Vagina (tissue), 2 donors: ENCODE measurements at regions of chr9 and their contacts with region 1.

Region 1: DNA sequence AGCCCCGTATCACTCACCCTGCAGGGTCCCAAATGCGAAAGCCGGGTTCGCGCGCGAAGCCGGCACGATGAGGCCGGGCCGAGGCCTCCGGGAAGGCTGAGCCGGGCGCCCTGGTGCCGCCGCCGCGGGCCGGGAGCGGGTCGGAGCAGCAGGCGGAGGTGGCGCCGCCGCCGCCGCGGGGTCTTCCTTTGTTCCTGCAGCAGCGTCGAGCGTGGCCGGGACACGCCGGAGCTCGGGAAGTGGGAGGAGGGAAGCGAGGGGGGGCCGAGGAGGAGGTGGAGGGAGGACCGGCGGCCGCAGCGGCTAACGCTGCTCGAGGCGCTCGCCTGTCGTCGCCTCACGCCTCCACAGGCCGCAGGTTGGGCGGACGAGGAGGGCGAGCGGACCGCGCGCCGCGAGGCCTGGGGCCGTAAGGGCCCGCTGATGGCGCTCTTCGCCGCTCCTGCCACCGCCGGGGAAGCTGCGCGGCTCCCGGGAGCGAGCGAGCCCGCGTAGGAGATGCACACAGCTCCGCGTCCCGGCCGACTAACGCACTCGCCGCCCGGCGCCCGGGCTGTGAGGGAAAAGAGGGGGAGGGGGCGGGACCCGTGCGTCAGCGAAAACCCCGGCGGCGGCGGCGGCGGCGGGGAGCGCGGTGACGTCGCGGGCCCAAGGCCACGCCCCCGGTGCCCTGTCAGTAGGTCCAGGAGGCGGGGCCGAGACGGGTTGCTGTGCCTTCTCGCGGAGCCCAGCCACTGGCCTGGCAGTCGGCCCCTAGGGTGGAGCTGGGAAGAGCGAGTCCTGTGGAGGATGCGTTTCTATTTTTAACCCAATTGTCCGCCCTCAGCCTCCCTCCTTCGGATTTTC is at the start of gene ZFAND5:
- DNase-seq: peak; percentile 97 to 99
- H3K4me3 ChIP-seq: peak within 1 kb of the TSS; percentile 85 to 89
- H3K27ac ChIP-seq: peak within 1 kb of the TSS; percentile 100
- H3K4me1 ChIP-seq: peaks cover 37% of the 10 kb centered on the region
- H3K27me3 ChIP-seq: no peaks in the 10 kb centered on the region
- CTCF ChIP-seq: peak in 1 of 3 experiments; percentile 10
- POLR2A ChIP-seq: peak; percentile 99
- total RNA-seq, gene ZFAND5: 277 TPM

Region 2: DNA sequence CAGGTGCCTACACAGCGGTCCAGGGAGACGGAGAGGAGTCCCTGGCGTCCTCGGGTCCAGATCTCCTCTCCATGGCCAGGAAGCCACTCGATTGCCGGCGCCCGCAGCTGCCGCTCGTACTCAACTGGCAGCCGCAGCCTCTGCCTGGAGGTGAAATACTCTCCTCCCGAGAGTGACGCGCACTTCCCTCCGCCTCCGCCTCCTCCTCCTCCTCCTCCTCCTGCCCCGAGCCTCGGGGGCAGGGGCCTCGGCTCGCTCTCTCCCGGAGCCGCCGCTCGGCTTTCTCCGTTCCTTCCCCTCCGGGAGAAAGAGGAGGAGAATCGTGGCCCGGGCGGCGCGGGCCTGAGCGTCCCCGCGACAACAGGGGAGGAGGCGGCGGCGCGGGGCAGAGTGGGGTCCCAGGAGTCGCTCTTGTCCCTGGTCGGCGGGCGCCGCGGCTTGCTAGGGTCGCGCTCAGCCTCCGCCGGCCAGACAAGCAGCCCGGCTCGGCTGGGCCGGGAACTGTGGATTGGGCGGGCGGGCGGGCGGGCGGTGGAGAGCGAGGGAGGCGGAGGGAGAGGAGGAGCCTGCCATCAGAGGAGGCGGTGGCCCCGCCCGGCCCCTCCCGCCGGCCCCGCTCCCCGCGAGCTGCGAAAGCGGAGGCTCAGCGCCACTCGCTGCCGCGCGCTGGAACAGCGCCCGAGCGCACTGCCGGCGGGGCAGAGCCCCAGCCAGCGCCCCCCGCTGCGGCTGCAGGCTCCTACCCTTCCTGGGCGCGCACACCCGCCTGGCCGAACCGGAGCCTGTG is 596.3 kb before region 1 on chr9 and contains the start of gene CEMIP2:
- intact Hi-C with region 1: loop called (anchors 10 kb)
- DNase-seq: peak in 1 of 2 donors; percentile 94
- H3K4me3 ChIP-seq: peak within 1 kb of the TSS; percentile 72 to 91
- H3K27ac ChIP-seq: peak within 1 kb of the TSS; percentile 97
- H3K4me1 ChIP-seq: peaks cover 48% of the 10 kb centered on the region
- H3K27me3 ChIP-seq: no peaks in the 10 kb centered on the region
- CTCF ChIP-seq: peak in 1 of 3 experiments; percentile 10
- POLR2A ChIP-seq: peak in 1 of 2 donors; percentile 73
- total RNA-seq, gene CEMIP2: 46.7 TPM

Region 3: GRCh38 chr9:72322259-72322658 is 42.6 kb before region 1 on chr9:
- intact Hi-C with region 1: no loop called
- DNase-seq: no peak
- H3K4me3 ChIP-seq: no peak overlapping the region
- H3K27ac ChIP-seq: no peak overlapping the region
- H3K4me1 ChIP-seq: no peaks in the 10 kb centered on the region
- H3K27me3 ChIP-seq: no peaks in the 10 kb centered on the region
- CTCF ChIP-seq: no peak
- POLR2A ChIP-seq: no peak

Region 4: DNA sequence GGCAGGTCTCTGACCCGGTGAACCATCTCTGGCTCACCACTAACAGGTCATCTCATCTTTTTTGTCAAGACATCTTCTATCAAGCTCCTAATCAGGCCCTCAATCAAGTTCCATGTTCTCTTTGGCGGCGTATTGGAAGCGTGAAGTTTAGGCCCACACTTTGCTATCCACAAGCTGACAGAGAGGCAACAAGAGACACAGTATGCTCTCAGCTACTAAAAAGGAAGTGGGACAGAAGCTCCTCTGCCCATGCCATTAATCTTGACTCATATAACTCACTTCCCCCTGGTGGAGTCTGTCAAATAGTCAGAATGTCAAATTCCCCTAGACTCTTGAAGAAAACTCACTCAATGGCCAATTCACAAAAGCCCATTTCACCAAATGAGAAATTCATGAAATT is 79.0 kb after region 1 on chr9:
- intact Hi-C with region 1: no loop called
- DNase-seq: no peak
- H3K4me3 ChIP-seq: no peak overlapping the region
- H3K27ac ChIP-seq: no peak overlapping the region
- H3K4me1 ChIP-seq: peaks cover 33% of the 10 kb centered on the region
- H3K27me3 ChIP-seq: no peaks in the 10 kb centered on the region
- CTCF ChIP-seq: no peak
- POLR2A ChIP-seq: no peak

Region 5: DNA sequence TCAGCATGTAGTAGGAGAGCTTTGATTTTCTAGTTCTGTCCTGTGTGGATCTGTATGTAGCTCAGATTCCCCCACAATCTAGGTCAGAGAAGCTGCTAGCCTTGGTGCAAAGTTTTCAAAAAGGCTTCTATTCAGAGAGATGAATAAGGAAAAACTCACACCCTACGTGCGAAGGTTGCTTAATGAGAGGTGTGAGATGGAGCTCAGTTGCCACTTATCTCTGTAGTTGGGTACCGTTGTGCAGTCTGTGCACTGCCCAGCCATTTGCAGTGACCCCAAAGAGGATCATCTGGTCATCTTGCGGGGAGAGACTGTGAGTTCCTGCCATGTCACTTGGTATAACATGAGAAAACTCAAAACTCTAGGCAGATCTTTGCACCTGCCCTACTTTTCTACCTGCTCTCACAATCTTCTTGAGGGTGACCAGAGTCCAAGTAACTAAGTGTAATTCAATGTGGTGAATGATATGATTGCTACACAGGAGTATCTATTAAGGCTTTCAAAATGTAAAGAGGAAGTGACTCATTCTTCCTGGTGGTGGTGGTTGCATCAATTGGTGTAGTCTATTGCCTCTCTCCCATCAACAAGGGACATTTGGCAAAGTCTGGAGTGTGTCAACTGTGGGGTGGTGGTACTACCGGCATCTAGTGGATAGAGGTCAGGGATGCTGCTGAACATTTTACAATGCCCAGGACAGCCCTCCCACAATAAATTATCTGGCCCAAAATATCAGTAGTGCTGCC is 221.7 kb after region 1 on chr9:
- intact Hi-C with region 1: loop called (anchors 10 kb)
- DNase-seq: peak in 1 of 2 donors; percentile 87
- H3K4me3 ChIP-seq: no peak overlapping the region
- H3K27ac ChIP-seq: peak overlapping the region; percentile 48
- H3K4me1 ChIP-seq: peaks cover 38% of the 10 kb centered on the region
- H3K27me3 ChIP-seq: no peaks in the 10 kb centered on the region
- CTCF ChIP-seq: no peak
- POLR2A ChIP-seq: no peak